IMR-90 (cell line): ENCODE measurements at regions of chrX and their contacts with region 1.

Region 1: DNA sequence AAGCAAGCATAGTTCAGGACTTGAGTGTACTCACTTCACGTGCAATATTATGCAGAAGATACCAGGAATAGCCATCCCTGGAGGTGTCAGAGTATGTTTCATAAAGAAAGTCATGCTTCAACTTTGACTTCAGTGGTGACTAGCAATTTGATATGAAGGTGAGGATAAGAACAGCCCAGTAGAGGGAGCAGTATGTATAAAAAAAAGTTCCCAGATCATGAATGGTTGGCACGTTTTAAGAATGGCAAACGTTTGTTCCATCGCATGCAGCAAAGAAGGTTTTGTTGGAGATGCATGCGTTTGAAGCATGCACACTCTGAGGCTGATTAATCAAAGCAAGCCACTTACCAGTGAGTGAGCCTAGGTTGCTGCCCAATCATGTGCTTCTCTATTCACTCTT is 33.5 kb upstream of the SLITRK4 start:
- DNase-seq: no peak
- ATAC-seq: no peak
- H3K4me3 ChIP-seq: no peak overlapping the region
- H3K27ac ChIP-seq: no peak overlapping the region
- H3K4me1 ChIP-seq: no peaks in the 10 kb centered on the region
- H3K27me3 ChIP-seq: no peaks in the 10 kb centered on the region
- CTCF ChIP-seq: no peak
- POLR2A ChIP-seq: no peak
- RAD21 ChIP-seq: no peak

Region 2: DNA sequence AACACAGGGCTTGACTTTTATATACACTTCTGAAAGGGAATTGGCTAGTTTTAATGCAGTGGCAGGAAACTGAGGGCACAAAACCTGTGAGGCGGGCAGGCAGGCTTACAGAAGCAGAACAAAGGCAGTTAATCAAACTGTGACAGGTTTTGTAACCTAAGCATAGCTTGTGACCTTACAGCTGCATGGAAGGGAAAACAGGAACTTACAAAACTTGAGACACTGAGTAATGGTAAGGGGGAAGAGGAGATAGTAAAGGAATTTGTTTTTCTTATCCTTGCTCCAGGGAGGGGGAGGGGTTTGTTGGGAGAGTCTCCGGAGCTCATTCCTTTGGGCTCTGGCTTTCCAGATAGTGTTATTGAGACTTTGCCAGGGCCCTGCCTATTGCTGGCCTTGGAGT is 89.1 kb before region 1 on chrX:
- CTCF ChIA-PET with region 1: no interaction called
- POLR2A ChIA-PET with region 1: no interaction called
- dilution Hi-C with region 1: no loop called
- in situ Hi-C with region 1: no loop called
- intact Hi-C with region 1: no loop called
- DNase-seq: no peak
- ATAC-seq: no peak
- H3K4me3 ChIP-seq: no peak overlapping the region
- H3K27ac ChIP-seq: no peak overlapping the region
- H3K4me1 ChIP-seq: no peaks in the 10 kb centered on the region
- H3K27me3 ChIP-seq: no peaks in the 10 kb centered on the region
- CTCF ChIP-seq: no peak
- POLR2A ChIP-seq: no peak
- RAD21 ChIP-seq: no peak

Region 3: GRCh38 chrX:143934542-143934941 is 265.1 kb after region 1 on chrX:
- CTCF ChIA-PET with region 1: no interaction called
- POLR2A ChIA-PET with region 1: no interaction called
- dilution Hi-C with region 1: no loop called
- in situ Hi-C with region 1: no loop called
- intact Hi-C with region 1: no loop called
- DNase-seq: no peak
- ATAC-seq: no peak
- H3K4me3 ChIP-seq: no peak overlapping the region
- H3K27ac ChIP-seq: no peak overlapping the region
- H3K4me1 ChIP-seq: no peaks in the 10 kb centered on the region
- H3K27me3 ChIP-seq: no peaks in the 10 kb centered on the region
- CTCF ChIP-seq: no peak
- POLR2A ChIP-seq: no peak
- RAD21 ChIP-seq: no peak

Region 4: DNA sequence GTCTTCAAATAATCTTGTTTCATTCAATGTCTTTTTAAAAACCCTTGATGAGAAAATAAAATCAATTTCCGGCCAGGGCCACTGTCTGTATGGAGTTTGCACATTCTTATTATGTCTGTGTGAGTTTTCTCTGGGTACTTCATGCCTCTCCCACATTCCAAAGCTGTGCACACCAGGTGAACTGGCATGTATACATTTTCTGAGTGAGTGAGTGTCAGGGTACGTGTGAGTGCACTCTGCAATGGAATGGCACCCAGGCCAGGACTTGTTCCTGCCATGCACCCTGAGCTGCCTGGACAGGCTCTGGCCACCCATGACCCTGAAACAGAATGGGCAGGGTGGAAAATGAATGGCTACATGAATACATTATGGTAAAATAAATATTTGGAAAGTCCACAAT is 275.8 kb after region 1 on chrX:
- CTCF ChIA-PET with region 1: no interaction called
- POLR2A ChIA-PET with region 1: no interaction called
- dilution Hi-C with region 1: no loop called
- in situ Hi-C with region 1: no loop called
- intact Hi-C with region 1: no loop called
- DNase-seq: no peak
- ATAC-seq: no peak
- H3K4me3 ChIP-seq: no peak overlapping the region
- H3K27ac ChIP-seq: no peak overlapping the region
- H3K4me1 ChIP-seq: no peaks in the 10 kb centered on the region
- H3K27me3 ChIP-seq: no peaks in the 10 kb centered on the region
- CTCF ChIP-seq: no peak
- POLR2A ChIP-seq: no peak
- RAD21 ChIP-seq: no peak

Region 5: DNA sequence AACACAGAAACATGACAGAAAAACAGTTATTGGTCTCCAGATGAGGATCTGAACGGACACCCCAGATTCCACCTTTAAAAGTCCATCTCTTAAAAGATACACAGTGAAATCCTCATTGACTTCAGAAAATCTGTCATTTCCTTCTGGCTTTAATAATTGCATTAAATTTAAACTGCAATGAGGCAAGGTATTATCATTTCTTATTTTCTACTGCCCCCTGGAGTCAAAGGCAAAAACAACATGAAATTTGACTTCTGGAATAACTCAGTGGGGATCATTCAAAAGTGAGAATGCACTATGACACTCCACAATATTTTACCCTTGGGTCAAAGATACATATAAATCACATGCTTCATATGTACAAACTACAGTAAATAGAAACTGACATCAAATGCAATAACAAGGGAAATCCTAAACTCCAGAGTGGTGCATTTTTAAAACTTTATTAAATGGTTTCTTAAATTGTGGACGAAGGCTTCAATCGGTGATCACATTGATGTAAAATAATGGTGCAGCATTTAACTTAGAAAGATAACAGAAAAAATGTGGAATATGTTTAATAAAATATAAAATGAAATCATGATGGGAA is 1521.5 kb after region 1 on chrX:
- CTCF ChIA-PET with region 1: no interaction called
- POLR2A ChIA-PET with region 1: no interaction called
- dilution Hi-C with region 1: no loop called
- in situ Hi-C with region 1: no loop called
- intact Hi-C with region 1: loop called (anchors 5 kb)
- DNase-seq: no peak
- ATAC-seq: no peak
- H3K4me3 ChIP-seq: no peak overlapping the region
- H3K27ac ChIP-seq: no peak overlapping the region
- H3K4me1 ChIP-seq: no peaks in the 10 kb centered on the region
- H3K27me3 ChIP-seq: no peaks in the 10 kb centered on the region
- CTCF ChIP-seq: peak; percentile 47
- POLR2A ChIP-seq: no peak
- RAD21 ChIP-seq: peak; percentile 44